CD4-positive, alpha-beta T cell (primary cell): ENCODE measurements at regions of chr15 and their contacts with region 1.

Region 1: GRCh38 chr15:63640146-63640545 is 43.0 kb downstream of the FBXL22 start:
- DNase-seq: no peak
- ATAC-seq: no peak
- H3K4me3 ChIP-seq: no peak overlapping the region
- H3K4me3 Mint-ChIP-seq: no peak overlapping the region
- H3K27ac ChIP-seq: no peak overlapping the region
- H3K27ac Mint-ChIP-seq: peak overlapping the region; percentile 28
- H3K4me1 ChIP-seq: no peaks in the 10 kb centered on the region
- H3K4me1 Mint-ChIP-seq: no peaks in the 10 kb centered on the region
- H3K27me3 ChIP-seq: no peaks in the 10 kb centered on the region
- H3K27me3 Mint-ChIP-seq: no peaks in the 10 kb centered on the region
- CTCF ChIP-seq: no peak

Region 2: GRCh38 chr15:63414474-63415120 is 225.5 kb before region 1 on chr15:
- CTCF ChIA-PET with region 1: no interaction called
- POLR2A ChIA-PET with region 1: no interaction called
- intact Hi-C with region 1: no loop called
- DNase-seq: peak in 1 of 14 experiments; percentile 39
- ATAC-seq: peak; percentile 88
- H3K4me3 ChIP-seq: no peak overlapping the region
- H3K4me3 Mint-ChIP-seq: no peak overlapping the region
- H3K27ac ChIP-seq: no peak overlapping the region
- H3K27ac Mint-ChIP-seq: peak overlapping the region; percentile 69
- H3K4me1 ChIP-seq: peaks cover 4% of the 10 kb centered on the region
- H3K4me1 Mint-ChIP-seq: peaks cover 9% of the 10 kb centered on the region
- H3K27me3 ChIP-seq: peaks cover 0 to 4% of the 10 kb centered on the region in 2 experiments
- H3K27me3 Mint-ChIP-seq: no peaks in the 10 kb centered on the region
- CTCF ChIP-seq: no peak

Region 3: GRCh38 chr15:63504247-63504978 is 135.7 kb before region 1 on chr15 and contains the start of gene USP3:
- CTCF ChIA-PET with region 1: no interaction called
- POLR2A ChIA-PET with region 1: no interaction called
- intact Hi-C with region 1: no loop called
- DNase-seq: peak; percentile 88 to 96 (median 93)
- ATAC-seq: peak; percentile 67
- H3K4me3 ChIP-seq: peak within 1 kb of the TSS; percentile 93
- H3K4me3 Mint-ChIP-seq: peak within 1 kb of the TSS; percentile 96
- H3K27ac ChIP-seq: peak within 1 kb of the TSS; percentile 97 to 99
- H3K27ac Mint-ChIP-seq: peak within 1 kb of the TSS; percentile 92
- H3K4me1 ChIP-seq: peaks cover 58% of the 10 kb centered on the region
- H3K4me1 Mint-ChIP-seq: peaks cover 77% of the 10 kb centered on the region
- H3K27me3 ChIP-seq: no peaks in the 10 kb centered on the region
- H3K27me3 Mint-ChIP-seq: no peaks in the 10 kb centered on the region
- CTCF ChIP-seq: peak; percentile 36
- total RNA-seq, gene USP3: 280 to 282 TPM

Region 4: DNA sequence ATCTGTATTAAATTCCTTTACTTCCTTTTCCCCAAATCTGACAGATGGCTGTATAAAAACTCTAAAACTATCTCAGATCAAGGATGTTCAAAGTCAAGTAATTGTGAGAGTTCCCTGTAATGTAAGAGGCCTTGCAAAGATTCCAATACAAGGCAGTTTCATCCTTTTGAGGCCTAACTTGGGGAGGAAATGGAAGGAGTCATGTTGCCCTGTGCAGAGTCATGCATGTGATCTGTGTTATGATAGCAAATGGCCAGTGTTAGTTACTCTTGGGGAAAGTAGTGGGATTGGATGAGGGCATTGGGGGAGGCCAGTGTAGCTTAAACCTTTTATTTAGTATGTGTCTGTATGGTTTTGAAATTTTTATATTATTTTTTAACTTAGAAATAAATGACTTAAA is 66.6 kb before region 1 on chr15:
- CTCF ChIA-PET with region 1: no interaction called
- POLR2A ChIA-PET with region 1: no interaction called
- intact Hi-C with region 1: loop called in 1 of 2 experiments (anchors 5 kb)
- DNase-seq: no peak
- ATAC-seq: no peak
- H3K4me3 ChIP-seq: no peak overlapping the region
- H3K4me3 Mint-ChIP-seq: no peak overlapping the region
- H3K27ac ChIP-seq: no peak overlapping the region
- H3K27ac Mint-ChIP-seq: peak overlapping the region; percentile 18
- H3K4me1 ChIP-seq: no peaks in the 10 kb centered on the region
- H3K4me1 Mint-ChIP-seq: peaks cover 23% of the 10 kb centered on the region
- H3K27me3 ChIP-seq: no peaks in the 10 kb centered on the region
- H3K27me3 Mint-ChIP-seq: no peaks in the 10 kb centered on the region
- CTCF ChIP-seq: no peak

Region 5: DNA sequence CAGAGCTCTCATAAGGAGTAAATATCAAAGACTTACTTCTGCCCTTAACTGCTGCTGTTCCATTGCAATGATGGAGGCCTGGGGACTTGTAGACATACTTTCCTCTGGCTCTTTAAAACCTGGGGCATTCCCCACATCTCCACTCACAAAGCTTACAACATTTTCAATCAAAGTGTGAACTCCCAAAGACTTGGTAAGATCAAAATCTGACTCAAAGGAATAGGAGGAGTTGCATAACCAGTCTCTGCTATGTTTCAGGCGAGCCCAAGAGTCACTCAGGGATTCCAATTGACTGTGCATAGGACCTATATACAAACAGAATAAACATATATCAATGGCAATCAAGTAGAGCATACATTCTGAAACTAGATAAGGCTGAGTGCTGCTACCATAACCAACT is 58.5 kb after region 1 on chr15:
- CTCF ChIA-PET with region 1: no interaction called
- POLR2A ChIA-PET with region 1: no interaction called
- intact Hi-C with region 1: loop called in 1 of 2 experiments (anchors 5 kb)
- DNase-seq: no peak
- ATAC-seq: no peak
- H3K4me3 ChIP-seq: no peak overlapping the region
- H3K4me3 Mint-ChIP-seq: no peak overlapping the region
- H3K27ac ChIP-seq: no peak overlapping the region
- H3K27ac Mint-ChIP-seq: no peak overlapping the region
- H3K4me1 ChIP-seq: no peaks in the 10 kb centered on the region
- H3K4me1 Mint-ChIP-seq: peaks cover 9% of the 10 kb centered on the region
- H3K27me3 ChIP-seq: no peaks in the 10 kb centered on the region
- H3K27me3 Mint-ChIP-seq: no peaks in the 10 kb centered on the region
- CTCF ChIP-seq: no peak